ENCODE measurements at regions of chr20 and their contacts with region 1.

Region 1: DNA sequence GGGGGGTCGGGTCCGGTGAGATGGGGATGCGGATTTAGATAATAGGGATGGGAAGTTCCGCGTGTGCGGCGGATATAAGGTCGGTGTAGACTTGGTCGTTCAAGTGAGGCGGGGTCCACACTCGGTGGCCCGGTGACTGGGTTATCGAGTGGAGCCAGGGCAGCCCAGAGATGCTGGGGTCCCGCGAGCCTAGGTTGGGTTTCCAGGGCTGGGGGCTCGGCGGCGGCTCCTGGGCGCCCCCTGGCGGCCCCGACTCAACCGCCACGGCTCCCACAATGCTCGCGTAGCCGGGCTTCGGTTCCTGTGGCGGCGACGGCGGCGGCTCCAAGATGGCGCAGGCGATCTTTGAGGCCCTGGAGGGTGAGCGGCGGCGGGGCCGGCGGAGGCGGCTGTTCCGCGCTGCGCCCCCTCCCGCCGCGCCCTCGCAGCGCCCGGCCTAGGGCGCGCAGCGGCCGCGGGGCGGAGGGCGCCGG is at the start of gene ZNF341:
- DNase-seq: peak; percentile 87
- H3K4me3 Mint-ChIP-seq: peak within 1 kb of the TSS; percentile 89
- H3K27ac Mint-ChIP-seq: peak within 1 kb of the TSS; percentile 97
- H3K4me1 Mint-ChIP-seq: peaks cover 27% of the 10 kb centered on the region
- H3K27me3 Mint-ChIP-seq: no peaks in the 10 kb centered on the region
- total RNA-seq, gene ZNF341: 6.7 and 6.8 TPM in 2 replicates

Region 2: GRCh38 chr20:33443512-33444239 is 288.1 kb before region 1 on chr20 and contains the start of gene SNTA1:
- intact Hi-C with region 1: loop called (anchors 5 kb)
- DNase-seq: peak; percentile 82
- H3K4me3 Mint-ChIP-seq: peak within 1 kb of the TSS; percentile 88
- H3K27ac Mint-ChIP-seq: peak within 1 kb of the TSS; percentile 76
- H3K4me1 Mint-ChIP-seq: peaks cover 10% of the 10 kb centered on the region
- H3K27me3 Mint-ChIP-seq: peaks cover 11% of the 10 kb centered on the region
- total RNA-seq, gene SNTA1: 0.76 and 0.91 TPM in 2 replicates

Region 3: DNA sequence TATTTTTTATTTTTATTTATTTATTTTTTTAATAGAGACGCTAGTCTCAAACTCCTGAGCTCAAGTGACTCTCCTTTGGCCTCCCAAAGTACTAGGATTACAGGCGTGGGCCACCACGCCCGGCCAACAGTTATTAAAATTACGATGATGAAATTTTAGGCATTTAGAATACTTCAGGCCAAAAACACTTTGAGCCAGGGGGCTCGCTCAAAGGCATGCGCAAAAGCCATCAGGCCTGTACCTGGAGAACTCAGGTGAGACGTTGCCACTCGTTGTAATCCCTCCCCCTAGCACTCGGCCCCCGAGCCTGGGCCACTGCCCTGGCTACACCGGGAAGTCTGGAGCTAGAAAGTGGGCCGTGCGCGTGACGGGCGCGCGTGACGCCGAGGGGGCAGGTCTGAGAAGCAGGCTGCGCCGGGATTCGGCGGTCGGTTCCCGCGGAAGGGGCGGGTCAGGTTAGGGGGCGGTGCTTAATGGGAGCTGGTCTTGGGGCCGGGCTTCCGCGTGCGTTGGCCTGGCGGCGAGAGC is 242.2 kb before region 1 on chr20:
- intact Hi-C with region 1: loop called (anchors 1 kb)
- DNase-seq: peak; percentile 99
- H3K4me3 Mint-ChIP-seq: peak overlapping the region; percentile 88
- H3K27ac Mint-ChIP-seq: peak overlapping the region; percentile 85
- H3K4me1 Mint-ChIP-seq: peaks cover 9% of the 10 kb centered on the region
- H3K27me3 Mint-ChIP-seq: no peaks in the 10 kb centered on the region

Region 4: DNA sequence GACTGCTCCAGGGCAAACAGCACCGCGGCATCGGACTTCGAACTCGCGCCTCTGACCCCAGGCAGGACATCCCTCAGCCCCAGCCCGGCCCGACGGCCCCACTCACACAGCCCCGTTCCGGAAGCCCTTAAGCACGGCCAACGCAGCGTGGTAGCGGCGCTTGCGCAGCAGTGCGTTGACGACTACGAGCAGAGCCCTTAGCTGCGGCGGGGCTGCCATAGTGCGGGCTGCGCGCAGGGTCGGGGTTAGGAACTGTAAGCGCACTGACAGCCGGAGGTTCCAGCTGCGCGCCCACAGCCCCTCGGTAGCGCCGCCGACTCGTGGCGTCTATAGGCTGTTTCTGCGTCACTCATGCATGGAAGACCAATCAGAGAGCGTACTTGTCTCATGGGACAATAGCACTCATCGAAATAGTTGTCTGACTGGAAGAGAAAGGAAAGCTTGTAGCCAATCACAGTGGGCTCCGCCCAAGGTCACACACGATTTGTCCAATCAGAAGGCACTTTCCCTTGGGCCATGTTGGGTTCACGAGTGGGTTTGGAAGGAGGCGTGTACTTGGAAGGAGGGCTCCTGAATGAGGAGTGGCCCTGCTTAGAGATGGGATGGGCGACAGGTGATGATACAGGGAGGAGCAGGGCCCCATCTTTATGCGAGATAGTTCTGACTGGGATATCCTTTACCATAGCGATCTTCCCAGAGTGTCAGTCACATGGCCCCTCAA is 11.6 kb before region 1 on chr20 and contains the start of gene PXMP4:
- intact Hi-C with region 1: loop called (anchors 1 kb)
- DNase-seq: peak; percentile 88
- H3K4me3 Mint-ChIP-seq: peak within 1 kb of the TSS; percentile 85
- H3K27ac Mint-ChIP-seq: peak within 1 kb of the TSS; percentile 93
- H3K4me1 Mint-ChIP-seq: peaks cover 30% of the 10 kb centered on the region
- H3K27me3 Mint-ChIP-seq: no peaks in the 10 kb centered on the region
- total RNA-seq, gene PXMP4: 7.3 and 7.9 TPM in 2 replicates